ENCODE measurements at regions of chr17 and their contacts with region 1.

Region 1: GRCh38 chr17:27892866-27893769 is at the start of gene LYRM9:
- DNase-seq: peak; percentile 86
- H3K4me3 ChIP-seq: peak within 1 kb of the TSS; percentile 55
- H3K27ac ChIP-seq: no peak within 1 kb of the TSS
- H3K4me1 ChIP-seq: peaks cover 8% of the 10 kb centered on the region
- CTCF ChIP-seq: peak; percentile 83
- total RNA-seq, gene LYRM9: 0.35 TPM in 1 of 2 replicates, not detected in the other

Region 2: DNA sequence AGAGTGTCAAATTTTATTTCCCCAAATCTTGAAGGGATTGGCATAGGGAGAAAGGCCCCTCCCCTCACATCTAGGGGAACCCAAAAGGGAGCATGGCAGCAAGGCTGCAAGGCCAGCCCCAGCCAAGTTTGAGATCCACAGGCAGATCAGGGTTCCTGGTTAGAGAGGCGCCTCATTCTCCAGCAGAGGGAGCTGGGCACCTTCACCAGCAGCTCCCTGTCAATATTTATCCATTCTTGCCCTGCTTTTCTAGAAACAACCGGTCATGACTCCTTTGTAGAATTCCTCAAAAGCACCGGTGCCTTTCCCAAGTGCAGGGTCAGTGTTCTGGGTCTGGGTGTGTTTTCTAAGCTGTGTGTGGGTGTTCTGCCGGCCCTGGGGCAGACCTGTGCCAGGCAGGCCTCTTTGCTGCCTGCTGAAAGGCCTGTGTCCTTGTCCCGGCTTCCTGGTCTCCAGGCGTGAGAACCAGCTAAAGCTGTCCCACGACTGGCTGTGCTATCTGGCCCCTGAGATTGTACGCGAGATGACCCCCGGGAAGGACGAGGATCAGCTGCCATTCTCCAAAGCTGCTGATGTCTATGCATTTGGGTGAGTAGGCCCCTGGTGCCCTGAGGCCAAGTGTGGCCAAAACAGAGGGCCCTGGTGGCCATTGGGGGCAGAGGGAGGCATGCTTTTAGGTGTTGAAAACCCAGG is 283.4 kb before region 1 on chr17:
- CTCF ChIA-PET with region 1: no interaction called
- POLR2A ChIA-PET with region 1: no interaction called
- intact Hi-C with region 1: no loop called
- DNase-seq: peak; percentile 34
- H3K4me3 ChIP-seq: no peak overlapping the region
- H3K27ac ChIP-seq: no peak overlapping the region
- H3K4me1 ChIP-seq: no peaks in the 10 kb centered on the region
- CTCF ChIP-seq: peak; percentile 72

Region 3: DNA sequence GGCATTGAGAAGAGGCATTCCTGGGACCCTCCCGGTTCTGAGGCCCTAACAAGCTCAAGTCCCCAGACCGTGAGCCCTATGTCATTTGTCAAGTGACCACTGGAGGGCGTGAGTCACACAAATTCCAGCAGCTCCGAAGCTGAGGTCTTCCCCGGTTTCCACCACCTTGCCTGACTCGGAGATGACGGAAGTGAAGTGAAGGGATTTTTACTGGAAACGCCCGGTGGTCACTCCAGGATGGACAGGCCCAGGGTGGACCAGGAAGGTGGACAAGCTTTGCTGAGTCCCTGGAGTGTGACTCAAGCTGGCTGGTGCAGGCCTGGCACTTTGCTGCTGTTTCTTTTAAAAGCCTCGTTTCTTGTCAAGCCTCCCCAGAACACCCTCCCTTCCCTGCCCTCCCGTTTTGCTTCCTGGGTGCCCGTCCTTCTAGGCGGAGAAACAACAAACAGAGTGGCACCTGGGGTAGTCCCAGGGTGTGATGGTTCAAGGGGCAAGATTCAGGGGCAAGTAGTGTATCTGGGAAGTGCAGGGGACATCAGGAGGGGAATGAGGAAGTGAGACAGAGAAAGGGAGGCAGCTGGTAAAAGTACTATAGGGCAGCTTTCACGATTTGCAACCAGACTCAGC is 87.5 kb before region 1 on chr17:
- CTCF ChIA-PET with region 1: no interaction called
- POLR2A ChIA-PET with region 1: interaction called, 7 read pairs
- intact Hi-C with region 1: loop called (anchors 1 kb)
- DNase-seq: peak; percentile 81
- H3K4me3 ChIP-seq: peak overlapping the region; percentile 55
- H3K27ac ChIP-seq: peak overlapping the region; percentile 41
- H3K4me1 ChIP-seq: peaks cover 13% of the 10 kb centered on the region
- CTCF ChIP-seq: peak; percentile 88

Region 4: DNA sequence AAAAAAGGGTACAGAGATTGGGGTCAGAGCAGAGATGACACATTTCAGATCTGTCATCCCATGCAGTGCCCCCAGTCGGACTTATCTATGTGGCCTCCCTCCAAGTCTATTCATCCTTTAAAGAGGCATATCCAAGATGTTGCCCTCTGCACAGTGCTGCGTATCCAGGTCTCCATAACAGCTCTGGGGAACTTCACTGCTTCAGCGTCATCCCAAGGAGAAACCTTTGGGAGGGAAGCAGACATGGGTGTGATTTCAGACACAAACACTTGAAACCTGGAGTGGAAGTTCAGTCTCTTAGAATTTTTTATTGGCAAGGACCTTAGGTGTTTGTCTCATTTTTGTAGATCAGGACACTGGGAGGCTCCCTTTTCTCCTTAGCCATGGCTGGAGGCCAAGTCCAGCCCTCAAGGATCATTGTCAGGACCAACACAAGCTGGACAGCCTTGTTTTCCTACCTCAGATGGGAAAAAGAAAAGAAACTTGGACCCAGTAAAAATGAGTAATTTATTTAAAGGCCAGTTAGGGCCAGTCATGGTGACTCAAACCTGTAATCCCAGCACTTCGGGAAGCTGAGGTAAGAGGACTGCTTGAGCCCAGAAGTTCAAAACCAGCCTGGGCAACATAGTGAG is 125.4 kb after region 1 on chr17:
- CTCF ChIA-PET with region 1: no interaction called
- POLR2A ChIA-PET with region 1: no interaction called
- intact Hi-C with region 1: loop called (anchors 10 kb)
- DNase-seq: no peak
- H3K4me3 ChIP-seq: no peak overlapping the region
- H3K27ac ChIP-seq: no peak overlapping the region
- H3K4me1 ChIP-seq: no peaks in the 10 kb centered on the region
- CTCF ChIP-seq: no peak

Measured in OCI-LY7 (cell line).